ENCODE measurements at regions of chr14 and their contacts with region 1.

Region 1: DNA sequence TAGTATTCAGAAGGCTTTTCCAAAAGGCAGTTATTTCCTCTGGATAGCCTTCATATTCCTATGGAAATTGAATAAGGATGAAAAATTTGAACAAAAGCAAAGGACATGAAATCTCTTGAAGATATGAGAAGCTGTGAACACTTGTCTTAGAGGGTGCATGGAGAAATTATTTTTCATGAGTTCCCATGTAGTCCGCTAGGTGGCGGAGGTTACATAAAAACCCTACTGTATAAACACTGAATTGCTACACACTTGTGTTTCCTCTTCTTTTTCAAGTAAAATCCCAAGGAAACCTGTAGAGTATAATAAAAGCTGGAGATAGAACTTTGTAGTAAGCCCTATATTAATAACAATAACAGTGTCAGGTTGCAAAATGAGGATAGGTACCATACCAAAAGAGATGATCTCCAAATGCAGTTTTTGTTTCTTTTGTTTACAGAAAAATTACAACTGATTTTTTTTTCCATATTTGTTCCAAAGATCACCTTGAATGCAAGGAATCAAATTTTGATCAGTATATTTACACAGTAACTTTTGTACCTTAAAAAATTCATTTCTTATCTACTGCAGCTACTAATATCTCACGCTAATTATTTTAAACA is 37.8 kb upstream of the OR4E1 start:
- DNase-seq: no peak
- H3K4me3 ChIP-seq: no peak overlapping the region
- H3K27ac ChIP-seq: no peak overlapping the region
- H3K4me1 ChIP-seq: no peaks in the 10 kb centered on the region
- H3K27me3 ChIP-seq: no peaks in the 10 kb centered on the region
- CTCF ChIP-seq: peak in 2 of 3 experiments; percentile 66 to 72; a peak in 3 of 4 replicates
- EP300 ChIP-seq: no peak
- POLR2A ChIP-seq: no peak
- RAD21 ChIP-seq: peak; percentile 39 to 43

Region 2: DNA sequence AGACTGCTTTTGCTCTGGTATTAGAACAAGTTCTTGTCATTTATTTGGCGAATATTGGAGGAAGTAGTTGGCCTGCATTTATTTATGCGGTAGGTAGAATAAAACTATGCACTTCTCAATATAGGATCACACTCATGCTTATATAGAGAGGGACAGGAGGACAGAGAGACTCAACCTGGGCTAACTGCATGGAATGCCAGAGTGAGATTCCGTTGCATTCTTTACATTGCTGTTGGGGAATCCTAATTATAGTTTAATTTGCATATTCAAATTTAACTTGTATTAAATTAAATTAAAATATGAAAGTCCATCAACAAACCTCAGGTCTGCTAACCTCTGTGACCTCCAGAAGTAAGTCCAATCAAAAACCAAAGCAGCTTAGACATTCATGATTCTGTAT is 158.2 kb before region 1 on chr14:
- CTCF ChIA-PET with region 1: no interaction called
- POLR2A ChIA-PET with region 1: no interaction called
- DNase-seq: no peak
- H3K4me3 ChIP-seq: no peak overlapping the region; a peak in 1 of 8 replicates
- H3K27ac ChIP-seq: no peak overlapping the region; the same call in 1 of the 2 replicates
- H3K4me1 ChIP-seq: peaks cover 7 to 24% (median 15%) of the 10 kb centered on the region in 4 experiments; a peak in 6 of 7 replicates
- H3K27me3 ChIP-seq: no peaks in the 10 kb centered on the region
- CTCF ChIP-seq: no peak
- EP300 ChIP-seq: no peak
- POLR2A ChIP-seq: no peak
- RAD21 ChIP-seq: no peak

Region 3: DNA sequence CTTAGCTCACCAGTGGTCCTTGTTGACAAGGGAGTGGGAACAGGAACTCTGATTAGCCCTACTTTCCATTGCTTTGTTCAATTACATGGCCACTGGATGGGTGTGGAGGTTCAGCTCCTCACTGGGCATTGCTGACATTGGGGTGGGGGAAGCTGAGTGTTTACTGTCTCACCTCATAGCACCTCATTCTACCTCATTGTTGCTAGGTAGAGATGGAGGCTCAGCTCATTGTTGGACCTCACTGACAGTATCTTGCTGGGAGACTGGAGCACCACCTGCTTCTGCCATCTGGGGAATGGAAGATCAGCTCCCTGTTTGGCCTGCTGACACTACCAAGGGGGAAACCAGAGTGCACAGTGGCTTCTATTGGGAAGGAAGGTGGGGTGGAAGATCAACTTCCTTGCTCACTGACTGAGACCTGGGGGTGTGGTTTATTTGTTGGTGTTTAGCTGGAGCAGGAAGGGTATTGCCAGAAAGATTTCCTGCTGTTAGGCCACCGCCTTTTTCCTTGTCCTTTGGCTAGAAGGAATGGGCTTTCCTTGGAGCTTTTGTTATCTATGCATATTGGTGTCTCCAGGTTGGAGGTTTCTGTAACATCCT is 59.2 kb before region 1 on chr14:
- CTCF ChIA-PET with region 1: interaction called, 10 read pairs
- POLR2A ChIA-PET with region 1: no interaction called
- DNase-seq: no peak
- H3K4me3 ChIP-seq: no peak overlapping the region
- H3K27ac ChIP-seq: no peak overlapping the region
- H3K4me1 ChIP-seq: peaks cover 0 to 5% (median 3%) of the 10 kb centered on the region in 4 experiments; a peak in 6 of 7 replicates
- H3K27me3 ChIP-seq: no peaks in the 10 kb centered on the region
- CTCF ChIP-seq: no peak
- EP300 ChIP-seq: no peak
- POLR2A ChIP-seq: no peak
- RAD21 ChIP-seq: no peak

Region 4: DNA sequence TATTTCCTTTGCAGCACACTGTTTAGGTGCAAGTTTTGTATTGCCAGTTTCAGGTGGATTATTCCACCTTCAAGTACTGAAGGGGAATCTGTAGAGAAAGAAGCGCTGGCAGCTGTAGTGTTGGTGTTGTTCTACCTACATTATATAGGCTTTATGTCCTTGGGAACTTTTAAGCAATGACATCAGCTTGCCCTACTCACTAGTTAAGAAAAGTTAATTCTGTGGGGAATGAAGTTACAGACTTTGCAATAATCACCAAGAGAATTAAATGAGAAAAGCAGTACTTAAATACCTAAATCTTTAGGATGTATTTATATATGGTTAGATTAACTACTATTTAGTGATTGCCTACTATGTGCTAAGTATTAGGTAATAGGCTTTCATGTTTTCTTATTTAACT is 37.7 kb before region 1 on chr14 and contains the start of gene OR4E1:
- CTCF ChIA-PET with region 1: interaction called, 11 read pairs
- POLR2A ChIA-PET with region 1: no interaction called
- DNase-seq: no peak
- H3K4me3 ChIP-seq: no peak within 1 kb of the TSS
- H3K27ac ChIP-seq: no peak within 1 kb of the TSS
- H3K4me1 ChIP-seq: no peaks in the 10 kb centered on the region
- H3K27me3 ChIP-seq: no peaks in the 10 kb centered on the region
- CTCF ChIP-seq: no peak
- EP300 ChIP-seq: no peak
- POLR2A ChIP-seq: no peak
- RAD21 ChIP-seq: no peak
- total RNA-seq, gene OR4E1: not detected in 2 replicates

Region 5: DNA sequence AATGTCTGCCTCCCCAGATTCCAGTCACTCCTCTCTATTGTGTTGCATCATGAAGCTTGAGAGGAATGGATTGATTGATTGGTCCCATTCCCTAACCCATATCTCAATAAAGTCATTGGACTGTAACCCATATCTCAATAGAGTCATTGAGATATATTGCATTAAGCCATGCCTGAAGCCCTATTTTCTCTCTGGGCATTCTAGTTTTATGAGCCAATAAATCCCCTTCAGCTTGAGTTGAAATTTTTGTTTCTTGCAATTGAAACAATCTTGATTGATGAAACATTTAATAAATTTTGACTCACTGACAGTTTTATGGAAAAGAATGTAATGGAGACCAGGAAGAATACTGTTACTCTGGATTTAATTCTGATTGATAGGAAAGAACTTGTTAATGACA is 17.0 kb before region 1 on chr14:
- CTCF ChIA-PET with region 1: interaction called, 11 read pairs
- POLR2A ChIA-PET with region 1: no interaction called
- DNase-seq: no peak
- H3K4me3 ChIP-seq: no peak overlapping the region
- H3K27ac ChIP-seq: no peak overlapping the region
- H3K4me1 ChIP-seq: no peaks in the 10 kb centered on the region
- H3K27me3 ChIP-seq: no peaks in the 10 kb centered on the region
- CTCF ChIP-seq: no peak
- EP300 ChIP-seq: no peak
- POLR2A ChIP-seq: no peak
- RAD21 ChIP-seq: no peak

Region 6: GRCh38 chr14:21723431-21724045 is 12.1 kb after region 1 on chr14:
- CTCF ChIA-PET with region 1: interaction called, 57 read pairs
- POLR2A ChIA-PET with region 1: no interaction called
- DNase-seq: peak; percentile 47 to 79
- H3K4me3 ChIP-seq: no peak overlapping the region
- H3K27ac ChIP-seq: no peak overlapping the region
- H3K4me1 ChIP-seq: no peaks in the 10 kb centered on the region
- H3K27me3 ChIP-seq: no peaks in the 10 kb centered on the region
- CTCF ChIP-seq: peak; percentile 85 to 99 (median 96)
- EP300 ChIP-seq: no peak
- POLR2A ChIP-seq: no peak
- RAD21 ChIP-seq: peak; percentile 69 to 79

Region 7: GRCh38 chr14:21734457-21735074 is 23.1 kb after region 1 on chr14:
- CTCF ChIA-PET with region 1: interaction called, 25 read pairs
- POLR2A ChIA-PET with region 1: no interaction called
- DNase-seq: no peak
- H3K4me3 ChIP-seq: no peak overlapping the region
- H3K27ac ChIP-seq: no peak overlapping the region
- H3K4me1 ChIP-seq: peaks cover 0 to 2% (median 0%) of the 10 kb centered on the region in 4 experiments; a peak in 1 of 7 replicates
- H3K27me3 ChIP-seq: no peaks in the 10 kb centered on the region; a peak in 1 of 7 replicates
- CTCF ChIP-seq: peak in 2 of 3 experiments; percentile 57 to 74; a peak in 2 of 4 replicates
- EP300 ChIP-seq: no peak
- POLR2A ChIP-seq: no peak
- RAD21 ChIP-seq: peak; percentile 40 to 53; a peak in 3 of 4 replicates